IMR-90 (cell line): ENCODE measurements at regions of chr16 and their contacts with region 1.

Region 1: GRCh38 chr16:14672403-14672971 is 21.6 kb downstream of the PLA2G10 start:
- DNase-seq: no peak
- ATAC-seq: no peak
- H3K4me3 ChIP-seq: no peak overlapping the region
- H3K27ac ChIP-seq: no peak overlapping the region
- H3K4me1 ChIP-seq: no peaks in the 10 kb centered on the region
- H3K27me3 ChIP-seq: no peaks in the 10 kb centered on the region
- CTCF ChIP-seq: no peak
- POLR2A ChIP-seq: no peak
- RAD21 ChIP-seq: no peak

Region 2: DNA sequence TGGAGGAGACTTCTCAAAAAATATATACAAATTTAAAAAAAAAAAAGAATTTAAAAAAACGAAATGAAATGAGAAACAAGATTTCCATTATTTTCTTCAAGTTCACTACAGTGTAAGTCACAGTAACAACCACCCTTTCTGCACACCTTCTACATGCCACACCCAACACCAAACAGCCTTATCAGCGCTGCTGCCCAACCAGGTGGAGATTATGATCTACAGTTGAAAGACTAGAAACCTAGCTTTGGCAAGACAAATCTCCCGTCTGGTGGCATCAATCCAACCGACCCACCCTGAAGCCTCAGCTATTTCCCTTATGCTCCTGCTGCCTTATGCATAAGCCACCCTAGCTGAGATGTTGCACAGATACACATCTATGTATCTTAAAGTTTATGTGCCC is 103.3 kb before region 1 on chr16:
- CTCF ChIA-PET with region 1: no interaction called
- POLR2A ChIA-PET with region 1: no interaction called
- dilution Hi-C with region 1: no loop called
- in situ Hi-C with region 1: no loop called
- intact Hi-C with region 1: no loop called
- DNase-seq: no peak
- ATAC-seq: no peak
- H3K4me3 ChIP-seq: no peak overlapping the region
- H3K27ac ChIP-seq: no peak overlapping the region
- H3K4me1 ChIP-seq: peaks cover 5% of the 10 kb centered on the region
- H3K27me3 ChIP-seq: no peaks in the 10 kb centered on the region
- CTCF ChIP-seq: no peak
- POLR2A ChIP-seq: no peak
- RAD21 ChIP-seq: no peak

Region 3: DNA sequence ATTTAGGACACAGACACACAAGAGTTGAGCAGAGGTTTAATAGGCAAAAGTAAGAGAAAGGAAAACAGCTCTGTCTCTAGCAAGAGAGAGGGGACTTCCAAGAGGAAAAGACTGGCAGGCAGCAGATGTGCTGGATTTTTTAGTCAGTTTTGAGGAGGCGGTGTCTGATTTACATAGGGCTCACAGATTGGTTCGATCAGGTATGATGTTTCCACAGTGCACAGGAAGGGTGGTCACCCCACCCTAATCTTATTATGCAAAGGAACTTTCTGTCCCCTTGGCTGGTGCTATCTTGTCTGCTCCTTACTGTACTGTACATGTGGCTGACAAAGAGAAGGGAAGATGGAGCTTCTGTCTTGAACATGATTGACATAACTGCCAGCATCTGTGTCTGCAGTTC is 14.4 kb before region 1 on chr16:
- CTCF ChIA-PET with region 1: interaction called, 3 read pairs
- POLR2A ChIA-PET with region 1: interaction called, 10 read pairs
- dilution Hi-C with region 1: no loop called
- in situ Hi-C with region 1: no loop called
- intact Hi-C with region 1: no loop called
- DNase-seq: no peak
- ATAC-seq: no peak
- H3K4me3 ChIP-seq: no peak overlapping the region
- H3K27ac ChIP-seq: no peak overlapping the region
- H3K4me1 ChIP-seq: no peaks in the 10 kb centered on the region
- H3K27me3 ChIP-seq: no peaks in the 10 kb centered on the region
- CTCF ChIP-seq: no peak
- POLR2A ChIP-seq: no peak
- RAD21 ChIP-seq: no peak